Activated CD8-positive, alpha-beta T cell treated with anti-CD3 and anti-CD28 coated beads for 36 hours (primary cell): ENCODE measurements at regions of chr16 and their contacts with region 1.

Region 1: DNA sequence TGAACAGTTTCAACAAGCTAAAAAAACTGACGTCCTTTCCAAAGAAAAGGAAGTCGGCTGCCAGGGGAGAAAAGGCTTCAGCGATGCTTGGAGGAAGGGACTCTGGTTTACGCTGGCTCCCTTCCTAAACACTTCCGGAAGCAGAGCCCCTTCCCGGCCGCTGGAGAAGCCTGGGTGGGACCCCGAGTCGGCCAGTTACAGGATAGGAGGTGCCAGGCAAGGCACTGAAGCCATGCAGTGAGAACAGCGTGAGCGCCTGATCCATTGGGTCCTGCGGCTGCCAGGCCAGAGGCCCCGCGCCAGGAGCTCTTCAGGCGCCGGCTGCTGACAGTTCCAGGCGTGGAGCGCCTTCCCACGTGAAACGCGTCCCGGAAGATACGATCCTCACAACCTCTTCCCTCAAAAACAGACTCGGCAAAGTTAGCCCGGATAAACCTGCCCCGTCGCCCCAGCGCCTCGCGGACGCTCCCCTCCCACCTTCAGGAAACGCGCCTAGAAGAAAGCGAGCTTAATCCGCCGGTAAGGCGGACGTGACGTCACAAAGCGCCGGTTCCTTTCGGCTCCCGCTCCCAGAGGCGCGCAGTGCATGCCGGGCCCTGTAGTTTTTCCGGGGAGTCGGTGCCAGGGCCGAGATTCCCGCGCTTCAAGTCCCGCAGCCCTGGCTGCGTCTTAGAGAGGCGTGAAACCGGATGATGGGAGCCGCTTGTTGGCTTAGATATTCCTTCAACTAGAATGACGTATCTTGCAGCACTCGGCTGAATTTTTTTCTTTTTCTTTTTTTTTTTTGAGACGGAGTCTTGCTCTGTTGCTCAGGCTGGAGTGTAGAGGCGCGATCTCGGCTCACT is at the start of gene ADAT1:
- DNase-seq: peak; percentile 99
- ATAC-seq: peak; percentile 93
- H3K4me3 Mint-ChIP-seq: peak within 1 kb of the TSS; percentile 97
- H3K27ac Mint-ChIP-seq: peak within 1 kb of the TSS; percentile 96
- H3K4me1 Mint-ChIP-seq: peaks cover 45% of the 10 kb centered on the region
- H3K27me3 Mint-ChIP-seq: no peaks in the 10 kb centered on the region
- CTCF ChIP-seq: no peak
- total RNA-seq, gene ADAT1: 41.7 to 43.6 TPM

Region 2: GRCh38 chr16:75566040-75566810 is 56.8 kb before region 1 on chr16 and contains the start of gene GABARAPL2:
- CTCF ChIA-PET with region 1: interaction called, 10 read pairs
- POLR2A ChIA-PET with region 1: interaction called, 6 read pairs
- intact Hi-C with region 1: loop called (anchors 2 kb)
- DNase-seq: peak; percentile 92
- ATAC-seq: peak; percentile 78
- H3K4me3 Mint-ChIP-seq: peak within 1 kb of the TSS; percentile 93
- H3K27ac Mint-ChIP-seq: peak within 1 kb of the TSS; percentile 98
- H3K4me1 Mint-ChIP-seq: peaks cover 31% of the 10 kb centered on the region
- H3K27me3 Mint-ChIP-seq: peaks cover 7% of the 10 kb centered on the region
- CTCF ChIP-seq: no peak
- total RNA-seq, gene GABARAPL2: 56.3 to 57.4 TPM

Region 3: GRCh38 chr16:75764154-75764768 is 141.3 kb after region 1 on chr16:
- CTCF ChIA-PET with region 1: interaction called, 10 read pairs
- POLR2A ChIA-PET with region 1: no interaction called
- intact Hi-C with region 1: no loop called
- DNase-seq: peak; percentile 76
- ATAC-seq: peak; percentile 94
- H3K4me3 Mint-ChIP-seq: no peak overlapping the region
- H3K27ac Mint-ChIP-seq: no peak overlapping the region
- H3K4me1 Mint-ChIP-seq: peaks cover 11% of the 10 kb centered on the region
- H3K27me3 Mint-ChIP-seq: no peaks in the 10 kb centered on the region
- CTCF ChIP-seq: peak; percentile 84